ENCODE measurements at regions of chr9 and their contacts with region 1.

Region 1: DNA sequence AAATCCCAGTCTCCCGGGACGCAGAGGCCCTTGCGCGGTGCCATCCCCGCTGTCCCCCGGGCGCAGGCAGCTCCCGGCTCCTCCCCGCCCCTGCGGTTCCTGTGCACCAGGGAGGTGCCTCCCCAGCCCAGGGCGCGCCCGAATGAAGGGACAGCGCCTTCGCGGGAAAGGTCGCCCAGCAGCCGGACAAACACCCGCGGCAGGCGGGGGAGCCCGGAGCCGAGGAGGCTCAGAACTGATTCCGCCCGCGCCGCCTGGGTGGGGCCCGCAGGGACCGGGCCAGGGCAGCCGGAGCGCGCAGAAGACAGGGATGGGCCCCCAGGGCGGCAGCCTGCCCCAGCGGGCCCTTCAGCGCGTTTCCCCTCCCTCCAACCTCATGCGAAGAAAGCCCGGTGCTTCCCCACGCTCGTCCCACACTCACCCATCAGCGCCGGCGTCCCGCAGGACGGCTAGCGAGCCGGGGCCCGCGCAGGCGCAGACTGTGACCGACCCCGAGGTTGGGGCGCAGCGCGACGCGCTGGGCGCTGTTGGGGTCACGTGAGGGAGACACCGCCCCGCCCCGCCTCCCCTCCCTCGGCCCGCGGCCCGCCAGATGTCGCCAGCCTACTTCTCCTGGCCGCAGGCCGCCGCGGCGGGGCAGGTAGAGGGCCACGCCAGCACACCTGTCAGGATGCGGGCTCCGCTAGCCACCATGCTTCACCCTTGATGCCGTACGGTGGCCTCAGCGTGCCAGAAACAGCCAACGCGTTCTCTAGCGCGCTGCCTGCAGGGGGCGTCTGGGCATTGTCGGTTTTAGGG is at the start of gene SLC25A51:
- DNase-seq: peak; percentile 90
- total RNA-seq, gene SLC25A51: 8.8 and 22.9 TPM in 2 replicates

Region 2: DNA sequence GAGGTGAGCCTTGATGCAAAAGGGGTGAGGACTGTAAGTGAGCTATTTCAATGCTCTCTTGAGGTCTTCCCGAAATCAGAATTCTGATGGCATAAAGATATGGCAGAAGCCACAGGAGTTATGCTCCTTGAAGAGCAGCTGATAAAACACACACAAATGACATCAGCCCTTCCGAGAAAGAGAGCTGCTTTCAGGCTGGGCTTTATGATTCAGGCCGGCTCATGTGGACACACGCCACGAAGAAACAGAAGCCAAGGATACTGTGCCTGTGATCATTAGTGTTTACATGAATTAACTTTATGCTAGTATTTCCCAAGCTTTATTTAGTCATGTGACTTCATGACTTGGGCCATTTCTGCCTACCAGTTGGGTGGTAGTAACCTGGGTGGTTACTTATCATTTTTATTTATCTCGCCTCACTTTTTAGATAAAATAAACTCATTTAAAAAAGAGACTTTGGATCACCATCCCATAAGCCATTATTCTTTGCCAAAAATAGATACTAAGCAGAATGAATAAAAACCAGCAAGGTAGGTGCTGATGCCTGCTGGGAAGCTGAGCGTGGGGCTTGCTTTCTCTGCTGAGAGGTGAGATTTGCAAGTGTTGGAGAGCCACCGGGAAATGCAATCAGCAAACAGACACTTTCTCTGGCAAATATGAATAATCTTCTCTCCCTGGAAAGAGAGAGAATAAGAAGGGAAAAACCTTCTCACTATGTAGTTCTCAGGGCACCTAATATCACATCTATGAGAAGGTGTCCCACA is 73.0 kb after region 1 on chr9:
- in situ Hi-C with region 1: no loop called
- DNase-seq: no peak

Region 3: DNA sequence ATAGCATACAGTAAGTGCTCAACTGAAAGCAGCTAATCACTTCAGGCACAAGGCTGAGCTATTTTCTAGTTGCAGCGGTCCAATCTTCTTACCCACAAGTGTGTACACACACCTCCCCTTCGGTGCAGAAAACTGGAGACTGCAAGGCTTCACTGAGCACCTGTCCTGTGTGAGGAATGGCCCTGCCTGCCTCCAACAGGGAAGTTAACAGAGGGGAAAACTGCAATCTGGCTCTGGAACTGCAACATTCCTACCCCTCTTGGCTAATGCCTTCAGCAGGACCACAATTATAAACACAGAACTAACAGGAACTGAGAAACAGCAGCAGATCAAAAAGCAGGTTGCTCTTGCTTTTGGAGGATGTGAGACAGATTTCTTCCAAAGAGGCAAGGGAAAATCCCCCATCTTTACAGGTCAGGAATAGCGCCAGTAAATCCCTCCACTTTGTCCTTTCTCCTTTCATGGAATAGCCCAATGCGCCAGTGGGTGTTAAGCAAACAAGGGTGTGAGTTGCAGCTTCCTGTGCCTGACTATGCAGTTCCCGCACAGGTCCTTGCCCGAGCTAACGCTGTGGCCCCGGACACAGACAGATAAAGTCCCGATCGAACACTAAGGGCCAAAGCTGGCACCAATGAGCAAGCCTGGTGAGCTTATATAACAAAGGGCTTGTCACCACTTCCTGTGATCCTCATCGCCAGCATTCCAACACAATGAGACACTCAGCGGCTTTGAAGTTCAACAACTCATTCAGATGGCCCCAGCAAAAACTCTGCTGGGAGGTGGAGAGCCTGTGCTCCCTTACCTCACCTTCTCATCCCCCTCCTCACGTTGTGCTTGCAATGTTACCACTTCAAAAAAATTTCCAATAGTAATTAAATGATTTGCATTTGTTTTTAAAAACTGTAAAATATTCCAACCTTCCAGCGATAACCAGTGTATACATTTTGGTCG is 143.7 kb after region 1 on chr9:
- in situ Hi-C with region 1: no loop called
- DNase-seq: peak; percentile 89

Region 4: DNA sequence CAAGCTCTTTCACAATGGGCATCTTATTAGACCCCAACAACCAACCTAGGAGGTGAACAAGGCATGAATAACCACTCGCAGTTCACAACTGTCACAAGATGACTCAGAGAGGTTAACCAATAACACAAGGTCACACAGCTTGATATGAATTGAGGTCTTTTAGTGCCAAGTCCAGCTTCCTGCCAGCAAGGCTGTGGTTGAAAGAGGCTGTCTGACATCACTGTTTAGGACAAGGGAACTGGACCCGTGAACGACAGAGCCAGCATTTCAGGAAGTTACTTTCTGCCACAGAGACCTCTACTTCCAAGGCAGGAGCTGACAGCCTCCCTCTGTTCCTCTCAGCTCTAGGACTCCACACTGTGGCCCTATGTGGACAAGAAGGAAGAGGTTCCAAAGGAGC is 435.2 kb after region 1 on chr9:
- in situ Hi-C with region 1: loop called (anchors 25 kb)
- DNase-seq: peak; percentile 4